Natural killer cell (primary cell): ENCODE measurements at regions of chr17 and their contacts with region 1.

Region 1: DNA sequence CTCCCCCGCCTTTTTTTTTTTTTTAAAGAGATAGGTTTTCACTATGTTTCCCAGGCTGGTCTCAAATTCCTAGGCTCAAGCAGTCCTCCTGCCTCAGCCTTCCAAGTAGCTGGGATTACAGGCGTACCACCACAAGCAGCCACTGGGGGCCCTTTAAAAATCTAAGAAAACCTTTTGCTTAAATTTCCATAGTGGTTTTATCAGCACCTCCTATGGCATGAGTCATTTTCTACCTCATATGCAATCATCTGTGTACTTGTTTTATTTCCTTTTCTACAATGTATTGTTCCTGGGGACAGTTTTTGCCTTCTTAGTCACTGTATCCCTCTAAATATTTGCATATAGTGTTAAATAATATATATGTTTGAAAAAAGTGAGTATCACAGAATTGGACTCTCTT is 29.2 kb downstream of the GNA13 start:
- DNase-seq: peak; percentile 48 to 75
- ATAC-seq: peak; percentile 69 to 77 (median 69)
- H3K4me3 ChIP-seq: no peak overlapping the region
- H3K4me3 Mint-ChIP-seq: peak overlapping the region; percentile 59
- H3K27ac ChIP-seq: peak overlapping the region; percentile 60
- H3K27ac Mint-ChIP-seq: peak overlapping the region; percentile 68 to 86
- H3K4me1 ChIP-seq: peaks cover 36% of the 10 kb centered on the region
- H3K4me1 Mint-ChIP-seq: peaks cover 78 to 81% of the 10 kb centered on the region in 2 donors
- H3K27me3 ChIP-seq: no peaks in the 10 kb centered on the region
- H3K27me3 Mint-ChIP-seq: no peaks in the 10 kb centered on the region
- CTCF ChIP-seq: peak; percentile 64

Region 2: GRCh38 chr17:64984851-64985521 is 42.3 kb before region 1 on chr17:
- intact Hi-C with region 1: loop called (anchors 1 kb)
- DNase-seq: peak; percentile 20 to 85
- ATAC-seq: peak in 1 of 3 donors; percentile 6
- H3K4me3 ChIP-seq: no peak overlapping the region
- H3K4me3 Mint-ChIP-seq: peak overlapping the region; percentile 82
- H3K27ac ChIP-seq: peak overlapping the region; percentile 94
- H3K27ac Mint-ChIP-seq: peak overlapping the region; percentile 99 to 100
- H3K4me1 ChIP-seq: peaks cover 42% of the 10 kb centered on the region
- H3K4me1 Mint-ChIP-seq: peaks cover 37 to 44% of the 10 kb centered on the region in 2 donors
- H3K27me3 ChIP-seq: no peaks in the 10 kb centered on the region
- H3K27me3 Mint-ChIP-seq: no peaks in the 10 kb centered on the region
- CTCF ChIP-seq: no peak

Region 3: DNA sequence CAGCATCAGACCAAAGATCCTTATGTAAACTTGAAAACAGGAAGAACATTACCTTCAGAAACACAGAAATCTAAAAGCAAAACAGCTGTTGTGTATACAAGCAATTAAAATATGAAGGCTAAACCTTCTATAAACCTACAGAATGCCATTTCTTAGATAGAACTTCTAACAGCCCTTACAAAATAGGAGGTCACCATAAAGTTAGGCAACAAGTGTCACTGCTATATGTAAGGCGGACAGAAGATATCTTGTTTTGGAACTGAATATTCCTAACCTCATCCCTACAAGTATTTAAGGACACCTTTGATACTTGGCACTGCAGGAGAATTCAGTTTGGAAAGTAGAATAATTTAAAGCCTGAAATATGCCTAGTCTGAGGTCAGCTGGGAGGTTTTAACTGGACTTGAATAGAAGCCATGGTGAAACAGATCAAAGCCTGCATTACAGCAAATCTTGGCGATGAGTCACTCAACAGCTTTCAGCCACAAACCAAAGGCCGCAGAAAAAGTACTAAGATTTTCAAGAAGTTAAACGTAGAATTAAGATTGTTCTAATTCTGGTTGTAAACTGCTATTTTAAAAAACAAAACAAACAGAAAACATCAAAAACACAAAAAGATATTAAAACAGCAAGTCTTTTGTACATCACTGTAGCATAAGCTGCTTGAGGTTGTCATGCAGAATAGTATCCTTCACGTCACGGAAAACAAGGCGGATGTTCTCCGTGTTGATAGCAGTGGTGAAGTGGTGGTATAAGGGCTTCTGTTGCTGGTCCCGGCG is 13.5 kb before region 1 on chr17:
- intact Hi-C with region 1: loop called (anchors 1 kb)
- DNase-seq: peak; percentile 50 to 59
- ATAC-seq: peak; percentile 79 to 82 (median 79)
- H3K4me3 ChIP-seq: no peak overlapping the region
- H3K4me3 Mint-ChIP-seq: peak overlapping the region; percentile 68
- H3K27ac ChIP-seq: peak overlapping the region; percentile 56
- H3K27ac Mint-ChIP-seq: peak overlapping the region; percentile 87 to 89
- H3K4me1 ChIP-seq: peaks cover 22% of the 10 kb centered on the region
- H3K4me1 Mint-ChIP-seq: peaks cover 75% of the 10 kb centered on the region in 2 donors
- H3K27me3 ChIP-seq: no peaks in the 10 kb centered on the region
- H3K27me3 Mint-ChIP-seq: no peaks in the 10 kb centered on the region
- CTCF ChIP-seq: no peak

Region 4: GRCh38 chr17:65039336-65039988 is 12.2 kb after region 1 on chr17:
- intact Hi-C with region 1: loop called (anchors 2 kb)
- DNase-seq: peak in 1 of 2 donors; percentile 90
- ATAC-seq: peak; percentile 72 to 90 (median 78)
- H3K4me3 ChIP-seq: no peak overlapping the region
- H3K4me3 Mint-ChIP-seq: peak overlapping the region; percentile 79
- H3K27ac ChIP-seq: peak overlapping the region; percentile 78
- H3K27ac Mint-ChIP-seq: peak overlapping the region; percentile 92 to 97
- H3K4me1 ChIP-seq: peaks cover 56% of the 10 kb centered on the region
- H3K4me1 Mint-ChIP-seq: peaks cover 72 to 75% of the 10 kb centered on the region in 2 donors
- H3K27me3 ChIP-seq: no peaks in the 10 kb centered on the region
- H3K27me3 Mint-ChIP-seq: no peaks in the 10 kb centered on the region
- CTCF ChIP-seq: no peak